Activated CD4-positive, alpha-beta memory T cell treated with anti-CD3 and anti-CD28 coated beads for 36 hours (primary cell): ENCODE measurements at regions of chr19 and their contacts with region 1.

Region 1: GRCh38 chr19:15304140-15304705 is 28.1 kb downstream of the BRD4 start:
- DNase-seq: peak; percentile 82
- H3K4me3 Mint-ChIP-seq: peak overlapping the region; percentile 23
- H3K27ac Mint-ChIP-seq: peak overlapping the region; percentile 86
- H3K4me1 Mint-ChIP-seq: peaks cover 84% of the 10 kb centered on the region
- H3K27me3 Mint-ChIP-seq: no peaks in the 10 kb centered on the region

Region 2: GRCh38 chr19:15280915-15281683 is 23.1 kb before region 1 on chr19:
- CTCF ChIA-PET with region 1: interaction called, 6 read pairs
- POLR2A ChIA-PET with region 1: interaction called, 6 read pairs
- intact Hi-C with region 1: loop called (anchors 1 kb)
- DNase-seq: no peak
- H3K4me3 Mint-ChIP-seq: no peak overlapping the region
- H3K27ac Mint-ChIP-seq: peak overlapping the region; percentile 60
- H3K4me1 Mint-ChIP-seq: peaks cover 85% of the 10 kb centered on the region
- H3K27me3 Mint-ChIP-seq: no peaks in the 10 kb centered on the region

Region 3: GRCh38 chr19:15318241-15318691 is 14.0 kb after region 1 on chr19:
- CTCF ChIA-PET with region 1: interaction called, 3 read pairs
- POLR2A ChIA-PET with region 1: interaction called, 10 read pairs
- intact Hi-C with region 1: loop called (anchors 1 kb)
- DNase-seq: no peak
- H3K4me3 Mint-ChIP-seq: no peak overlapping the region
- H3K27ac Mint-ChIP-seq: peak overlapping the region; percentile 76
- H3K4me1 Mint-ChIP-seq: peaks cover 87% of the 10 kb centered on the region
- H3K27me3 Mint-ChIP-seq: no peaks in the 10 kb centered on the region